Cardiac septum (tissue), 1 donor: ENCODE measurements at regions of chr17 and their contacts with region 1.

Region 1: GRCh38 chr17:64326395-64327054 is 63.5 kb upstream of the TEX2 start:
- DNase-seq: peak; percentile 93

Region 2: DNA sequence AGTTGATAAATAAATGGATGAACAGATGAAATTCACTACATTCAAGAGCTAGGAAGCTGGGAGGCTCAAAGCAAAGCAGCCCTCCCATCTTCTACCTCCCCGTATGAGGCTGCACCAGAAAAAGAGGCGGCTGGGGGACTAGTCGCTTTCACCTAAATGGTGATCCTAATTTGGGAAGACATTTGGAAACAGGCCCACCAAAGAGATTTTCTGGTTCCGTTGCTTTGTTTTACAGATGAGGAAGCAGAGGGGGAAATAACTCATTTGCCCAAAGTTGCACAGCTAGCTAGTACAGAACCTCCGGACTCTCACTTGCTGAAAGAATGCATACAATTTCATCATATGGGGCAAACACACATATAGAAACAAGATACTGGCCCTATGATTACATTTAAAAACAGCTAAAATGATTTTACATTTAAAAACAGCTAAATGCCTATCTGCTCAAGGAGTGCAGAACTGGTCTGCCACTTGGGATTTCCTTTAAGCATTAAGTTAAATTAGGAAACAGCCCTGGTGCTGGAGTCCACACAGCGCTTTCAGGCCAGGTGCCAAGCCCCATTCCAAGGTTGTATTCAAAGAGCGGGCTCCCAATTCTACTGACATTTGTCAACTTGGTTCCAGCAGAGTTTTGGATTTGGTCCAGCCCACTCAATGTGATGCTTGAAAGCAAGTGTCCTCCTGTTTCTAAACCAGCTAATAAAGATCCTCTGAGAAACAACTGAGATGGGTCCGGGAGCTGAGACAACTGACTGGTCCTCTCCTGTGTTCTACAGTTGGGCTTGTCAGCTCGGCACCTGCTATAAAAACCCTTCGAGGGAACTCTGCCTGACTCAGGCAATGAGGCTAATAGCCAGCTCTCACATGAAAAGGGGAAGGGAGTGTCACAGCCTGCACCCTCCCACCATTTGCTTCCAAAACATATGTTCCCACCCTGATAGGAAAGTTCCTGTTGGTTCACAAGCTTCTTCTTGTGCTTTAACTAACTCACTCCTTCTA is 208.2 kb before region 1 on chr17:
- intact Hi-C with region 1: no loop called
- DNase-seq: no peak

Region 3: DNA sequence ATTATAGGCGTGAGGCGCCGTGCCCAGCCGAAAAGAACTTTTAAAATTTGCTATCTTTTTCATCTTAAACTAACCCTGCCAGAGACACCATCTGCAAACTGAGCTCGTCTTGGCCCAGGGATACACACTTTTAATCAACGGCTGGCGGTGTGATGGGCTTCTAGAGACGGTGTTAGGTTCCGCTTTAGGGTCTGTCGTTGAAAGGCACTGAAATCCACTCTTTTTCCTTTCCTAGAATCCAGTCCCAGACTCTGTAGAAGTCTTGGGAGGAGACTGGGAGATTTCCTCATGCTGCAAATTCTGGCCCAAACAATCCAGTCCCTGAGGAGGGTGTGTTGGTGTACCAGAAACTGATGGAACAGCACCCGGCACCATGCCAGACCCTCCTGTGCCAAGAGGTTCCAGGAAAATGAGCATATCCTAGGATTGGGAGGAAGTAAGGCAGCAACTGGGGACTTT is 11.5 kb before region 1 on chr17:
- intact Hi-C with region 1: loop called (anchors 1 kb)
- DNase-seq: peak; percentile 88

Region 4: GRCh38 chr17:64343853-64344637 is 17.5 kb after region 1 on chr17:
- intact Hi-C with region 1: loop called (anchors 1 kb)
- DNase-seq: peak; percentile 92

Region 5: GRCh38 chr17:64357191-64357981 is 30.9 kb after region 1 on chr17:
- intact Hi-C with region 1: loop called (anchors 2 kb)
- DNase-seq: peak; percentile 79